Ovary (tissue), 10 donors: ENCODE measurements at regions of chr3 and their contacts with region 1.

Region 1: GRCh38 chr3:49668414-49668797 is 5.7 kb upstream of the APEH start:
- DNase-seq: no peak
- H3K4me3 ChIP-seq: no peak overlapping the region
- H3K27ac ChIP-seq: no peak overlapping the region
- H3K4me1 ChIP-seq: peaks cover 4% of the 10 kb centered on the region
- H3K27me3 ChIP-seq: no peaks in the 10 kb centered on the region
- CTCF ChIP-seq: no peak
- EP300 ChIP-seq: no peak
- POLR2A ChIP-seq: no peak

Region 2: GRCh38 chr3:49554633-49555265 is 113.7 kb before region 1 on chr3:
- intact Hi-C with region 1: loop called in 2 of 4 experiments (anchors 5 kb)
- DNase-seq: peak in 1 of 5 donors; percentile 70
- H3K4me3 ChIP-seq: peak overlapping the region; percentile 52
- H3K27ac ChIP-seq: no peak overlapping the region
- H3K4me1 ChIP-seq: peaks cover 3% of the 10 kb centered on the region
- H3K27me3 ChIP-seq: no peaks in the 10 kb centered on the region
- CTCF ChIP-seq: no peak
- EP300 ChIP-seq: no peak
- POLR2A ChIP-seq: no peak

Region 3: DNA sequence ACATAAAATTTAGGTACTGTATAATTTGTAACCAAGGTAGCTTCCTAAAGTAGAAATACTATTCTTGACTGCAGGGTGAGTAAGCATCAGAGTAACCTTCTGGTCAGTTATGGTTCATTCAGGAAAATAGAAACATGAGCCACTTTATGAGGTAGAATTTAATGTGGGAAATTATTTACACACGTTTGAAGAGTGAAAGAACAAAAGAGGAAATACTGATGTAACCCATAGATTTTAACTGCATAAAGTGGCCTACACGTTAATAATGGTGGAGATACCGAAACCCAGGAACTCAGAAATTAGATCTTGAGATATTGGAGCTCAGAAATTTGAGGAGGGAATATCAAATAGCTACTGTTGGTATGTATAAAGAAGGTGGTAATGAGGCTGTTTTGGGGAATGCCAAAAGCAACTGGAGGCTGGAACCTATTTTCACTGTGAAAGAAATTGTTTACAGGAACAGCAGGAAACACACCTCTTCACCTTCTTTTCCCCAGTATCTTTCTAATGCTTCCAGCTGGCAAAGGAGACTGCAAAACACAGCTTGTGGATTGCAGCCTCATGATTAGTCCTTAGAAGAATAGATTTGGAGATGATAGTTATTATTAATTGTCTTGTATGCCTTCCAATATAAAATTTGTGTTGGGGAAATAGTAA is 1222.4 kb after region 1 on chr3:
- intact Hi-C with region 1: no loop called
- DNase-seq: no peak
- H3K4me3 ChIP-seq: no peak overlapping the region
- H3K27ac ChIP-seq: no peak overlapping the region
- H3K4me1 ChIP-seq: no peaks in the 10 kb centered on the region
- H3K27me3 ChIP-seq: no peaks in the 10 kb centered on the region
- CTCF ChIP-seq: no peak
- EP300 ChIP-seq: no peak
- POLR2A ChIP-seq: no peak